ENCODE measurements at regions of chr3 and their contacts with region 1.

Region 1: DNA sequence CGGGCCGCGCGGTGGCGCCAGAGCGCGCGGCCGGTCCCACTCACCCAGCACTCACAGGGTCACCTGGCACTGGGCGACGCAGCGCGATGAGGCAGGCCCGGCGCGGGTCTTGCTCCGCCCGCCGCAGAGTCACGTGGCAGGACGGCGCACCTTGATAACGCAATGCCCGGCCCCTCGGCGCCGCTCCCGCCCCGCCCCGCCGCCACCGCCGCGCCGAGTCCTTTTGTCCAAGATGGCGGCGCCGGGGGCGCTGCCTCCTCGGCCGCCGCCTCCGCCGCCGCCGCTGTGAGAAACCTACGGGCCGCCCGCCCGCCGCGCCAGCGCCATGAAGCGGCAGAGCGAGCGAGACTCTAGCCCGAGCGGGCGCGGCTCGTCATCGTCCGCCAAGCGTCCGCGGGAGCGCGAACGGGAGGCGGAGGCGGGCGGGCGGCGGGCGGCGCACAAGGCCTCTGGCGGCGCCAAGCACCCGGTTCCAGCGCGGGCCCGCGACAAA is at the start of gene RBM15B:
- DNase-seq: peak; percentile 76
- H3K4me3 ChIP-seq: peak within 1 kb of the TSS; percentile 64 to 96 (median 88)
- H3K27ac ChIP-seq: peak within 1 kb of the TSS; percentile 96 to 99 (median 98)
- H3K4me1 ChIP-seq: peaks cover 62 to 94% (median 74%) of the 10 kb centered on the region in 3 donors
- H3K27me3 ChIP-seq: no peaks in the 10 kb centered on the region
- CTCF ChIP-seq: peak; percentile 77 to 96 (median 91)
- POLR2A ChIP-seq: peak in 3 of 4 donors; percentile 24 to 76 (median 73)
- total RNA-seq, gene RBM15B: 26.3 to 35.3 (median 27.0) TPM

Region 2: DNA sequence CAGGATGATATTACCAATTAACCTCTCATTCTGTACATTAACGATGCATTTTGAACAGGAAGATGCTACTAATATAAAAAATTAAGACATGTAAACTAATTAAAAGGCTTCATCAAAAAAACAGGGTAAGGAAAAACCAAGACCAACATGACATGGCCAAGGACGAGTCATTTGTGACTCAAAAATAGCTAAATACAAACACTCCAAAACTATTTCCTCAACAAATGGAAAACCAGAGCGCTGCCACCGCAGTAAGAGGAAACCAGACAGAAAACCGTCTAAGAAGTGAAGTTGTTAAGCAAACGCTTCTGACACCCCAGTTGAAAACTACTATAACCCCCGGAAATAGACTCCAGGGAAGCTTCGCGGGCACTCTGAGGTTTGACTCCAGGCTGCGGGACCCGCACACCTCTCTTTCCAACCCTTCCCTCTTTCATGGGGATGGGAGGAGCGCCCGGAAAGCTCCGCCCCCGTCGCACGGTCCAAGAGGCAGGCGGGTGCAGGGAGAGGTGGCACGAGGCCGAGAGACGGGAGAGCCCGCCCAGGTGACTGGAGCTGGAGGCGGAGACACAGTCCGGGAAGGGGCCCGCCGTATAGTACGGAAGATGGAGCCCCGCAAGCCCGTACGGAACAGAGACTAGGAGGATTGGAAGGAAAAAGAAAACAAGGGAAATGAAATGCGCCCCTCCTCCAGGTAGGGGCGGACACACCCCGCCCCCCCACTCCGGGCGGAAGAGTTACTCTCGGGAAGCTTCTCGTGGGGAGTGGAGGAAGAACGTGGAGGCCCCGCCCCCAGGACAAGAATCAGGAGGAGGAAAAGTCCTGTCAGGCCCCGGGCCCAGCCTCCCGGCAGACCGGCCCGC is 108.0 kb after region 1 on chr3:
- intact Hi-C with region 1: loop called (anchors 5 kb)
- DNase-seq: peak; percentile 84
- H3K4me3 ChIP-seq: peak overlapping the region; percentile 64 to 97 (median 86)
- H3K27ac ChIP-seq: peak overlapping the region; percentile 95 to 100 (median 98)
- H3K4me1 ChIP-seq: peaks cover 0 to 22% (median 9%) of the 10 kb centered on the region in 3 donors
- H3K27me3 ChIP-seq: no peaks in the 10 kb centered on the region
- CTCF ChIP-seq: peak in 1 of 6 experiments; percentile 5
- POLR2A ChIP-seq: peak in 2 of 4 donors; percentile 41 to 62

Region 3: GRCh38 chr3:51682079-51682478 is 291.0 kb after region 1 on chr3:
- intact Hi-C with region 1: loop called (anchors 10 kb)
- DNase-seq: peak; percentile 37
- H3K4me3 ChIP-seq: no peak overlapping the region
- H3K27ac ChIP-seq: peak overlapping the region; percentile 50 to 83 (median 64)
- H3K4me1 ChIP-seq: peaks cover 16 to 97% (median 44%) of the 10 kb centered on the region in 3 donors
- H3K27me3 ChIP-seq: no peaks in the 10 kb centered on the region
- CTCF ChIP-seq: peak; percentile 67 to 94 (median 78)
- POLR2A ChIP-seq: no peak

Measured in esophagus squamous epithelium (tissue), 5 donors.